Heart left ventricle (tissue), 16 donors: ENCODE measurements at regions of chr21 and their contacts with region 1.

Region 1: GRCh38 chr21:18265944-18266343 is 21.3 kb downstream of the CHODL start:
- DNase-seq: no peak
- ATAC-seq: no peak
- H3K4me3 ChIP-seq: no peak overlapping the region
- H3K27ac ChIP-seq: no peak overlapping the region
- H3K4me1 ChIP-seq: no peaks in the 10 kb centered on the region
- H3K27me3 ChIP-seq: no peaks in the 10 kb centered on the region
- CTCF ChIP-seq: peak in 4 of 12 donors; percentile 10 to 24 (median 18)
- POLR2A ChIP-seq: no peak

Region 2: GRCh38 chr21:18041012-18041411 is 224.9 kb before region 1 on chr21:
- intact Hi-C with region 1: loop called in 1 of 10 experiments (anchors 10 kb)
- DNase-seq: no peak
- ATAC-seq: no peak
- H3K4me3 ChIP-seq: no peak overlapping the region
- H3K27ac ChIP-seq: no peak overlapping the region
- H3K4me1 ChIP-seq: no peaks in the 10 kb centered on the region
- H3K27me3 ChIP-seq: no peaks in the 10 kb centered on the region
- CTCF ChIP-seq: peak in 10 of 12 donors; percentile 22 to 61 (median 43)
- POLR2A ChIP-seq: no peak